ENCODE measurements at regions of chr5 and their contacts with region 1.

Region 1: GRCh38 chr5:163408311-163408923 is 29.0 kb upstream of the CCNG1 start:
- DNase-seq: peak; percentile 20
- ATAC-seq: peak; percentile 91
- H3K4me3 ChIP-seq: no peak overlapping the region
- H3K27ac ChIP-seq: no peak overlapping the region
- H3K4me1 ChIP-seq: no peaks in the 10 kb centered on the region
- H3K27me3 ChIP-seq: no peaks in the 10 kb centered on the region
- CTCF ChIP-seq: peak; percentile 82
- EP300 ChIP-seq: no peak
- POLR2A ChIP-seq: no peak
- RAD21 ChIP-seq: peak; percentile 66

Region 2: DNA sequence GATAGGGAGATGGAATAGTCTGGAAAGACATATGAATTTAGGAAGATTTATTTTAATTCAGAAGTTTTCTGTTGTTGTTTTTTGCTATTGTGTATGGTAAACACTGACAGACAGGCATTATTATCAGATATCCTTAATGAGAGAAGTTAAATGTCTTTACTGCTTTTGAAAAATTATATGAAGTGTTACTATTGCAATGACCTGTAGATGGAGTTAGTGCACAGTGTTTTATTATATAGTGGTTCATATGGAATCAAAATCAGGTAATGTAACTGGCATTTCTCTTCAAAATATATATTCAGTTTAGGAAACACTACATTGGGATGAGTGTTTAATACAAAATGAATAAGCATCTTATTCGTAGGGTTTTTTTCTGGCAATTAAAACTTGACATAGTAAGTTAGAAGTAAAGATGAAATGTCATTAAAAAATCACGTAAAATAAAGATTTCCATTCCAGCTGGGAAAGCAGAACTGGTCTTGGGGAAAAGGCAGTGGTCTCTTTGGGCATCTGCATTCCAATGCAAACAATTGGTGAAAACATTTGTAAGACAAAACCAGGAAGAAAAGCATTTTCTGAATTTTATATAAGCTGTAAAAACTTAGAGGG is 1556.6 kb before region 1 on chr5:
- CTCF ChIA-PET with region 1: no interaction called
- POLR2A ChIA-PET with region 1: no interaction called
- in situ Hi-C with region 1: no loop called
- intact Hi-C with region 1: loop called (anchors 5 kb)
- DNase-seq: no peak
- ATAC-seq: no peak
- H3K4me3 ChIP-seq: no peak overlapping the region
- H3K27ac ChIP-seq: no peak overlapping the region
- H3K4me1 ChIP-seq: no peaks in the 10 kb centered on the region
- H3K27me3 ChIP-seq: no peaks in the 10 kb centered on the region
- CTCF ChIP-seq: no peak
- EP300 ChIP-seq: no peak
- POLR2A ChIP-seq: no peak
- RAD21 ChIP-seq: no peak

Region 3: GRCh38 chr5:163306421-163306820 is 102.0 kb before region 1 on chr5:
- CTCF ChIA-PET with region 1: no interaction called
- POLR2A ChIA-PET with region 1: no interaction called
- in situ Hi-C with region 1: no loop called
- intact Hi-C with region 1: loop called (anchors 1 kb)
- DNase-seq: peak; percentile 10
- ATAC-seq: 0 out of 3 replicates have a peak, but pooled peaks have one; percentile 35
- H3K4me3 ChIP-seq: no peak overlapping the region
- H3K27ac ChIP-seq: no peak overlapping the region
- H3K4me1 ChIP-seq: no peaks in the 10 kb centered on the region
- H3K27me3 ChIP-seq: no peaks in the 10 kb centered on the region
- CTCF ChIP-seq: peak; percentile 43; the same call in 1 of the 2 replicates
- EP300 ChIP-seq: no peak
- POLR2A ChIP-seq: no peak
- RAD21 ChIP-seq: no peak